ENCODE measurements at regions of chr5 and their contacts with region 1.

Region 1: GRCh38 chr5:63401436-63402046 is 560.7 kb downstream of the HTR1A start:
- DNase-seq: peak; percentile 50 to 65 (median 57)
- ATAC-seq: peak; percentile 88 to 95 (median 88)
- H3K4me3 ChIP-seq: no peak overlapping the region
- H3K27ac ChIP-seq: no peak overlapping the region
- H3K4me1 ChIP-seq: no peaks in the 10 kb centered on the region
- H3K27me3 ChIP-seq: no peaks in the 10 kb centered on the region
- CTCF ChIP-seq: peak; percentile 73 to 88 (median 79)
- POLR2A ChIP-seq: no peak

Region 2: DNA sequence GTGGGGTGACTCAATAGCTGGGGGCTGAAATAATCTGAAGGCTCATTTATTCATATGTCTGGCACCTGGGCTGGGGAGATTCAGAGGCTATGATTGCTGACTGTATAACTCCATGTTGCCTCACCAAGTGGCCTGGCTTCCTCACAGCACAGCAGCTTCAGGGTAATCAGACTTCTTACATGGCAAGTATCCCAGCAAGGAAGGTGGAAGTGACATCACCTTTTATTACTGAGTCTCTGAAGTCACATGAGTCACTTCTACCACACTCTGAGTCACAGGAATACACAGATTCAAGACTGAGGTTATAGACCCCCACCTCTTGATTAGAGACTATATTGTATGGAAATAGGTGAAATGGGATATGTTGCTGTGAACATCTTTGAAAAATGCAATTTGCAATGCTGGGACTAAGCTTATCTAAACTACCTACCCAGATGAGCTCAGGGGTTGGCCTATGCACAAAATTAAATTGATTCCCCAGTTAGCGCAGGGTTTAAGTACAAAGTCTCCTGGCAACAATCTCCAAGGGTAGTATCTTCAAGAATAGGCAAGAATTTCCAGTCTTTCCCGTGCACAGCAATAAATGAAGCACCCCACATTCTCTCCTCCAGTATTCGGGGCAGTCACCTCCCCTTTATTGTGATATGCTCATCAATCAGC is 269.8 kb before region 1 on chr5:
- intact Hi-C with region 1: loop called in 1 of 2 experiments (anchors 10 kb)
- DNase-seq: no peak
- ATAC-seq: peak; percentile 79 to 93 (median 84)
- H3K4me3 ChIP-seq: no peak overlapping the region
- H3K27ac ChIP-seq: peak overlapping the region in 1 of 3 donors; percentile 41
- H3K4me1 ChIP-seq: peaks cover 0 to 17% (median 0%) of the 10 kb centered on the region in 4 donors
- H3K27me3 ChIP-seq: no peaks in the 10 kb centered on the region
- CTCF ChIP-seq: no peak
- POLR2A ChIP-seq: no peak

Region 3: GRCh38 chr5:63341442-63341841 is 60.1 kb before region 1 on chr5:
- intact Hi-C with region 1: no loop called
- DNase-seq: no peak
- ATAC-seq: no peak
- H3K4me3 ChIP-seq: no peak overlapping the region
- H3K27ac ChIP-seq: no peak overlapping the region
- H3K4me1 ChIP-seq: no peaks in the 10 kb centered on the region
- H3K27me3 ChIP-seq: no peaks in the 10 kb centered on the region
- CTCF ChIP-seq: no peak
- POLR2A ChIP-seq: no peak

Region 4: GRCh38 chr5:63963080-63963735 is 561.7 kb after region 1 on chr5:
- intact Hi-C with region 1: loop called in 1 of 2 experiments (anchors 5 kb)
- DNase-seq: peak in 1 of 3 donors; percentile 56
- ATAC-seq: peak; percentile 79 to 85 (median 82)
- H3K4me3 ChIP-seq: no peak overlapping the region
- H3K27ac ChIP-seq: no peak overlapping the region
- H3K4me1 ChIP-seq: peaks cover 0 to 2% (median 0%) of the 10 kb centered on the region in 4 donors
- H3K27me3 ChIP-seq: peaks cover 0 to 7% of the 10 kb centered on the region in 2 donors
- CTCF ChIP-seq: peak; percentile 45 to 76 (median 66)
- POLR2A ChIP-seq: no peak

Measured in right lobe of liver (tissue), 6 donors.